ENCODE measurements at regions of chr6 and their contacts with region 1.

Region 1: DNA sequence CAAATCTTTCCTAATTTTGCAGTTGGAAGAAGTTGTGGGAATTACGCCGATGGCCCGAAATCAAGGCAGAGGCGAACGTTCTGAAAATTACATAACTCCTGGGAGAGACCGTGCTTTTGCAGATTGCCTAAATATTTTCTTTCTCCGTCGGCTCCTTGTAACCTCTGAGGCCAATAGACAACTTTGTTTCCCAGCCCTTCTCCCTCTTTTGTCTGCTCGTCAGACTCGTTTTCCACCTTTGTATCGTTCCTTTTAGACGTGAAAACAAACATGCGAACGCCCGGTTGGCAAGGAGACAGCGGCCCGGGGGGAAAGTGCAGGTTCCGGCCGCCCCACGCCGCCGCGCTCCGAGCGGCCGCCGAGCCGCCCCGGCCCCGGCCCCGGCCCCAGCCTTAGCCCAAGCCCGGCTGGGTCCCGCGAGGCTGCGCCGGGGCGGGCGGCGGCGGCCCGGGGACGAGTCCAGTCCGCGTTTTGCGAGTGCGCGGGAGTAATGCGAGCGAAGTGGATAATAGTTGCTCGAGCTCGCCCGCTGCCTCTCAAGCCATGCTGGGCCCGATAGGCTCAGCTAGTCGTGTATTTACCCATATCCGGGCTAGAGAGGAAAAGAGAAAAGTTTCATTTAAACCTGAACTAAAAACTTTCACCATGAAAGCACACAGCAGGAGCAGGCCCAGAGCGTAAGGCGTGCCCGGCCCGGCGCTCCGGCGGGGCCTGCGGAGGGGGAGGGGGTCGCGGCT is at the start of gene ARID1B:
- DNase-seq: peak; percentile 67 to 86 (median 80)
- ATAC-seq: peak; percentile 74
- H3K4me3 ChIP-seq: peak within 1 kb of the TSS; percentile 79
- H3K4me3 Mint-ChIP-seq: peak within 1 kb of the TSS; percentile 87 to 100 (median 96)
- H3K27ac ChIP-seq: peak within 1 kb of the TSS; percentile 81
- H3K27ac Mint-ChIP-seq: peak within 1 kb of the TSS; percentile 94 to 99 (median 99)
- H3K4me1 ChIP-seq: peaks cover 4 to 10% of the 10 kb centered on the region in 2 donors
- H3K4me1 Mint-ChIP-seq: peaks cover 11 to 44% (median 38%) of the 10 kb centered on the region in 7 donors
- H3K27me3 ChIP-seq: no peaks in the 10 kb centered on the region
- H3K27me3 Mint-ChIP-seq: peaks cover 0 to 4% (median 0%) of the 10 kb centered on the region in 5 donors
- total RNA-seq, gene ARID1B: 88.8 to 164 (median 141) TPM

Region 2: GRCh38 chr6:155314092-155314772 is 1462.8 kb before region 1 on chr6 and contains the start of gene TFB1M:
- CTCF ChIA-PET with region 1: no interaction called
- POLR2A ChIA-PET with region 1: interaction called, 3 read pairs
- intact Hi-C with region 1: loop called (anchors 1 to 2 kb)
- DNase-seq: peak; percentile 84 to 98 (median 94)
- ATAC-seq: peak; percentile 96
- H3K4me3 ChIP-seq: peak within 1 kb of the TSS; percentile 86
- H3K4me3 Mint-ChIP-seq: peak within 1 kb of the TSS; percentile 80 to 98 (median 96)
- H3K27ac ChIP-seq: peak within 1 kb of the TSS; percentile 90
- H3K27ac Mint-ChIP-seq: peak within 1 kb of the TSS; percentile 84 to 97 (median 93)
- H3K4me1 ChIP-seq: peaks cover 3 to 5% of the 10 kb centered on the region in 2 donors
- H3K4me1 Mint-ChIP-seq: peaks cover 10 to 48% (median 41%) of the 10 kb centered on the region in 7 donors
- H3K27me3 ChIP-seq: no peaks in the 10 kb centered on the region
- H3K27me3 Mint-ChIP-seq: no peaks in the 10 kb centered on the region
- total RNA-seq, gene TFB1M: 20.5 to 45.4 (median 29.7) TPM

Region 3: DNA sequence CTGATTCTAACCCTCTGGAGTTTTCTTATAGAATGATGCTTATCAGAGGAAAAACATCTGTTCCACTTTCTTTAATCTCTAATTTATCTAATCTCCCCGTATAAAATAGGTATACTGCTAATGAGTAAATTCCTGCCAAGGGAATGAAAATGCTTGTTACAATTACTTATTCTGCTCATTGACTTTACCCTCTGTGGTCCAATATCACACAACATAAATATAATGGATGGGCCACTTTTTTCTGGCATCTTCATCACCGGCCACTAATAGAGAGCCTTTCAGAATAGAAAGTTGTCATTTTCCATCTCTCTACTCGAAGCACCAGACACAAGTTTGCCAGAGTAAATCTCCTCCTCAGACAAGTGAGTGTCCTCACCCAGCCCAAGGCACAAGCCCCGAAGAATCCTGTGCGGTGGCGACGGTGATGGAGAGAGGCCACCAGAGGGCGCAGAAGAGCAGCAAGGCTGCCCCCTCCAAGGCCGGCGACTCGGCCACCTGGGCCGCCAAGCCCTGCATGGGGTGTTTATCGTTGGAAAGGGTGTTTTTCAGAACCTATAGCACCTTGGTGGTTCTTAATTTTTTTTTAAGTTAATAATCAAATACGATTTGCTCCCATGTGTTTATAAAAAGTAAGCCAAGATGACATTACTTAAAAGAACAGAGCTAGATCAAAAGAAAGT is 212.7 kb before region 1 on chr6:
- CTCF ChIA-PET with region 1: no interaction called
- POLR2A ChIA-PET with region 1: no interaction called
- intact Hi-C with region 1: loop called (anchors 1 to 5 kb)
- DNase-seq: peak; percentile 54 to 76 (median 65)
- ATAC-seq: peak; percentile 95
- H3K4me3 ChIP-seq: no peak overlapping the region
- H3K4me3 Mint-ChIP-seq: peak overlapping the region in 1 of 10 donors; percentile 34
- H3K27ac ChIP-seq: no peak overlapping the region
- H3K27ac Mint-ChIP-seq: peak overlapping the region in 4 of 9 donors; percentile 21 to 49 (median 32)
- H3K4me1 ChIP-seq: peaks cover 0 to 3% of the 10 kb centered on the region in 2 donors
- H3K4me1 Mint-ChIP-seq: peaks cover 5 to 13% (median 7%) of the 10 kb centered on the region in 7 donors
- H3K27me3 ChIP-seq: no peaks in the 10 kb centered on the region
- H3K27me3 Mint-ChIP-seq: peaks cover 0 to 11% (median 8%) of the 10 kb centered on the region in 5 donors

Region 4: GRCh38 chr6:156634951-156635371 is 142.0 kb before region 1 on chr6:
- CTCF ChIA-PET with region 1: no interaction called
- POLR2A ChIA-PET with region 1: no interaction called
- intact Hi-C with region 1: no loop called
- DNase-seq: no peak
- ATAC-seq: no peak
- H3K4me3 ChIP-seq: no peak overlapping the region
- H3K4me3 Mint-ChIP-seq: peak overlapping the region; percentile 29 to 78 (median 54)
- H3K27ac ChIP-seq: no peak overlapping the region
- H3K27ac Mint-ChIP-seq: peak overlapping the region in 5 of 9 donors; percentile 19 to 61 (median 40)
- H3K4me1 ChIP-seq: peaks cover 0 to 21% of the 10 kb centered on the region in 2 donors
- H3K4me1 Mint-ChIP-seq: peaks cover 14 to 34% (median 26%) of the 10 kb centered on the region in 7 donors
- H3K27me3 ChIP-seq: no peaks in the 10 kb centered on the region
- H3K27me3 Mint-ChIP-seq: no peaks in the 10 kb centered on the region

Region 5: DNA sequence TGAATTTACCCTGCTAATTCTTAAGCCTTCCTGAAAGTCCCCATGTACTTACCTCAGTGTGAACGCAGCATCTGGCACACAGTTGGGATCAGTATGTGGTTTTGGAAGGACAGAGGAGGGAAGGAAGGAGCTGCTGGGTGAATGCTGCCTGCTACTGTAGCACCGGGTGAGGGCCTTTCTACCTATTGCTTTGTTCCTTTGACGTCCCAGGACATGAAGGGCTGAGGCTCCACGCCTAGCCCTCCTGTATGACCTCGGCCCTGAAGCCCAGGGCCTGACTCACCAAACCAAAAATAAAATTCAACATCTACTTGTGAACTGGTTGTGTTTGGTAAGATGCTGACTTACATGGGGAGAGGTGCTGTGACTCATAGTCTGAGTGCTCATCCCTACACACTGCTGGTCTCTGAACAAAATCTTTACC is 51.3 kb after region 1 on chr6:
- CTCF ChIA-PET with region 1: no interaction called
- POLR2A ChIA-PET with region 1: no interaction called
- intact Hi-C with region 1: loop called in 1 of 2 experiments (anchors 5 kb)
- DNase-seq: no peak
- ATAC-seq: peak; percentile 40
- H3K4me3 ChIP-seq: no peak overlapping the region
- H3K4me3 Mint-ChIP-seq: peak overlapping the region in 1 of 10 donors; percentile 18
- H3K27ac ChIP-seq: no peak overlapping the region
- H3K27ac Mint-ChIP-seq: peak overlapping the region in 1 of 9 donors; percentile 12
- H3K4me1 ChIP-seq: peaks cover 11 to 23% of the 10 kb centered on the region in 2 donors
- H3K4me1 Mint-ChIP-seq: peaks cover 28 to 91% (median 83%) of the 10 kb centered on the region in 7 donors
- H3K27me3 ChIP-seq: no peaks in the 10 kb centered on the region
- H3K27me3 Mint-ChIP-seq: no peaks in the 10 kb centered on the region

Region 6: DNA sequence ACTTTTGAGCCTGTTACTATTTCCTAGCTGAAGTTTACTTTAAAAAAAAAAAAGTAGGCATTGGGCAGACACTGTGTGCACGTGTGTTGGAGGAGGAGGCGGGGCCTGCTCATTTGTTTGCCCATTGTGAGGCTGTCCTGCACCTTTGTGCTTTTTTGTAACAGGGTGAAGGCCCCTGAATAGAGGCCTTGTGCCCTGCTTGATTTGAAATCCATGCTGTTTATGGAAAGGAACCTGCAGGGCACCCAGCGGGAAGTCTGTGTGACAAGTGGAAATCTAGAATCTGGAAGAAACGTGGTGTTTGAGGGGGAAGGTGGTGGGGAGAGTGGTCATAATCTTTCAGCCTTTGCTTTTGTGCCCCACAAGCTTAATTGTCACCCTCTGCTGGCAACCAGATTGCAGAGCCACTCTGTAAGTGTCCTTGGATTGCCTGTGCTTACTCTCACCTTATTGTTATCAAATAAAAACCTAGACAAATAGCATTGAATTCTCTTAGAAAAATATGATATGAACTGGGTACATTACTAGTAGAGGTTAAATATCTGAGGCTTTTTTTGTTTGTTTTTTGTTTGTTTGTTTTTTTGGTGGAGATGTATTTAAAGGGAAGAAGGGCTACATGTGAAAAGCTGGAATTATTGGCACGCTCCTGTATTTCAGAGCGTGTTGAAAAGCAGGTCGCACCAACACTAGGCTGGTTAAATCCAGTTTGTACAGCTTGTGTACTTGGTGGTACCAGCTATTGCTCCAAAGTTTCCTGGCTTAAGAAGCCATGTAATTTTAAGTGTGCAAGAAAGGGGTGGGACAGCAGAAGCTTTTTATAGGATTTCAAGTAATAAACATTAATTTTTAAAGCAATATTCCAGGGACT is 156.4 kb after region 1 on chr6:
- CTCF ChIA-PET with region 1: no interaction called
- POLR2A ChIA-PET with region 1: no interaction called
- intact Hi-C with region 1: no loop called
- DNase-seq: no peak
- ATAC-seq: no peak
- H3K4me3 ChIP-seq: no peak overlapping the region
- H3K4me3 Mint-ChIP-seq: peak overlapping the region in 1 of 10 donors; percentile 13
- H3K27ac ChIP-seq: no peak overlapping the region
- H3K27ac Mint-ChIP-seq: peak overlapping the region in 6 of 9 donors; percentile 4 to 80 (median 16)
- H3K4me1 ChIP-seq: peaks cover 4 to 5% of the 10 kb centered on the region in 2 donors
- H3K4me1 Mint-ChIP-seq: peaks cover 24 to 87% (median 82%) of the 10 kb centered on the region in 7 donors
- H3K27me3 ChIP-seq: no peaks in the 10 kb centered on the region
- H3K27me3 Mint-ChIP-seq: no peaks in the 10 kb centered on the region

Region 7: GRCh38 chr6:157021344-157021992 is 244.5 kb after region 1 on chr6:
- CTCF ChIA-PET with region 1: interaction called, 3 read pairs
- POLR2A ChIA-PET with region 1: interaction called, 53 read pairs
- intact Hi-C with region 1: loop called (anchors 1 kb)
- DNase-seq: peak; percentile 85 to 93 (median 91)
- ATAC-seq: peak; percentile 90
- H3K4me3 ChIP-seq: peak overlapping the region; percentile 79
- H3K4me3 Mint-ChIP-seq: peak overlapping the region; percentile 76 to 98 (median 95)
- H3K27ac ChIP-seq: peak overlapping the region; percentile 100
- H3K27ac Mint-ChIP-seq: peak overlapping the region; percentile 86 to 100 (median 99)
- H3K4me1 ChIP-seq: peaks cover 5 to 21% of the 10 kb centered on the region in 2 donors
- H3K4me1 Mint-ChIP-seq: peaks cover 32 to 82% (median 64%) of the 10 kb centered on the region in 7 donors
- H3K27me3 ChIP-seq: no peaks in the 10 kb centered on the region
- H3K27me3 Mint-ChIP-seq: no peaks in the 10 kb centered on the region

Region 8: GRCh38 chr6:157323255-157323965 is 546.4 kb after region 1 on chr6 and contains the start of gene TMEM242:
- CTCF ChIA-PET with region 1: no interaction called
- POLR2A ChIA-PET with region 1: no interaction called
- intact Hi-C with region 1: loop called in 1 of 2 experiments (anchors 1 kb)
- DNase-seq: peak; percentile 68 to 93 (median 81)
- ATAC-seq: peak; percentile 98
- H3K4me3 ChIP-seq: peak within 1 kb of the TSS; percentile 95
- H3K4me3 Mint-ChIP-seq: peak within 1 kb of the TSS; percentile 93 to 99 (median 95)
- H3K27ac ChIP-seq: peak within 1 kb of the TSS; percentile 76
- H3K27ac Mint-ChIP-seq: peak within 1 kb of the TSS; percentile 78 to 93 (median 92)
- H3K4me1 ChIP-seq: peaks cover 8 to 12% of the 10 kb centered on the region in 2 donors
- H3K4me1 Mint-ChIP-seq: peaks cover 10 to 47% (median 24%) of the 10 kb centered on the region in 7 donors
- H3K27me3 ChIP-seq: no peaks in the 10 kb centered on the region
- H3K27me3 Mint-ChIP-seq: peaks cover 0 to 30% (median 10%) of the 10 kb centered on the region in 5 donors
- total RNA-seq, gene TMEM242: 11.6 to 15.6 (median 13.2) TPM

Measured in naive thymus-derived CD4-positive, alpha-beta T cell (primary cell).